ENCODE measurements at regions of chr19 and their contacts with region 1.

Region 1: DNA sequence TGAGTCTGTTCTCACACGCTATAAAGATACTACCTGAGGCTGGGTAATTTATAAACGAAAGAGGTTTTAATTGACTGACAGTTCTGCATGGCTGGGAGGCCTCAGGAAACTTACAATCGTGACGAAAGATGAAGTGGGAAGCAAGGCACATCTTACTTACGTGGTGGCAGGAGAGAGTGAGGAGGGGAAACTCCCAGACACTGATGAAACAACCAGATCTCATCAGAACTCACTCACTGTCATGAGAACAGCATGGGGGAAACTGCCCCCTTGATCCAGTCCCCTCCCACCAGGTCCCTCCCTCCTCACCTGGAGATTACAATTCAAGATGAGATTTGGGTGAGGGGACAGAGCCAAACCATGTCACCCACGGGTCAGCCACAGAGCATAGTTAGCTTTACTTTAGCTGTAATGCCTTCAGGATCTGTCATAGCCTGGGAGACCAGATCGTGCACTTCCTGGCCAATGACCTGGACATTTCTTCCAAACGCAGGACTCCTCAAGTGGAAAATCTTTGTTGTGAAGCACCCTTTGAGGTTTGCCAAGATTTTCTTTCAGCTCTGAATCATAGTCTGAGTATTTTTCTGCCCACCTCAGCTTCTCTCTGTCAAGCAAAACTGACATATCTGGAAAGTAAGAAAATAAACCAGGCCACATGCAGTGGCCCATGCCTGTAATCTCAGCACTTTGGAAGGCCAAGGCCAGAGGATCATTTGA is 25.2 kb upstream of the HIF3A start:
- DNase-seq: no peak

Region 2: GRCh38 chr19:46201413-46202310 is 70.0 kb before region 1 on chr19:
- intact Hi-C with region 1: no loop called
- DNase-seq: no peak

Region 3: GRCh38 chr19:46218160-46218559 is 53.5 kb before region 1 on chr19:
- intact Hi-C with region 1: no loop called
- DNase-seq: no peak

Region 4: DNA sequence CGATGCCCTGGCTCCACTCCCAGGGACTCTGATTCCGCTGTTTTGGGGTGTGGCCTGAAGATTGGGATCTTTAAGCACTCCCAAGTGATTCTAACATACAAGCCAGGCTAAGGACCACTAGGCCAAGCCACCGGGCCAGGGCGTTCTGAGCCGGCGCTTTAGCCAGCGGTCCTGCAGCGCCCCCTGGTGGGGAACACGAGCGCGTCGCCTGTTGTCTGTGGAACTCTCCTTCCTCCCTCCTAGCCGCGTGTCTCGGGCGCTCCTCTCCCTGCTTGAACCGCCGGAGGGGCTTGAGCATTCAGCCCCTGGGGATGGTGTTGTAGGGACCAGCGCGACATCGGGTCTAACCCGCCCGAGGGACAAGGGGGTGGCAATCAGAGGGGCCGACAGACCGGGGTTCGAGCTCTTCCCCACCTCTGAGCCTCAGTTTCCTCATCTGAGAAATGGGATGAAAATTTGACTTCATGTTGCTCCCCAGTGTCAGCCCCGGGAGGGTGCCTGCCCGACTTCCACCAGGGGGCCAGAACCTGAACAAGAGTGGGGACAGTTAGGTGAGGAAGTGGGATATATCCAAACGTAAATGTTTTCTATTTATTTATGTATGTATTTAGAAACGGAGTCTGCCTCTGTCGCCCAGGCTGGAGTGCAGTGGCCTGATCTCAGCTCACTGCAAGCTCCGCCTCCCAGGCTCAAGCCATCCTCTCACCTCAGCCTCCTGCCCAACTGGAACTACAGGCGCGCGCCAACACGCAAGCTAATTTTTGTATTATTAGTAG is 242.0 kb after region 1 on chr19:
- intact Hi-C with region 1: loop called in 1 of 2 experiments (anchors 10 kb)
- DNase-seq: peak; percentile 96